ENCODE measurements at regions of chr2 and their contacts with region 1.

Region 1: DNA sequence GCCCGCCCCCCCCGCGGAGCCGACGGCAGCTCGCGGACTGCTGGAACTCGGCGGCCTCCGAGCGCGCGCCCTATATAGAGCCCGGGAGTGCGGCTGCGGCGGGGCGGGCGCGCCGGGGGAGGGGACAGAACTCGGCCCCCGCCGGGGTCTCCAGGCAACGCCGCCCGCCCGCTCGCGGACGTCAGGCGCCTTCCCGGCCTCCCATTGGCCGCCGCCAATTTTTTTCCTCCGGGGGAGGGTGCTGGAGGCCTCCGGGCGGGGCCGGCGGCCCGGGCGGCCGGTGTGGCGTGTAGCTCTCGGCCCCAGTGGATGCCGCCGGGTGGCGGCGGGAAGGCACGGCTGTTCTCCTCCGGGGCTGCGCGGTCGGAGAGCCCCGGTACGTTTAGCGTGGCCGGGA is at the start of gene ZFP36L2:
- DNase-seq: peak; percentile 97
- H3K4me3 ChIP-seq: peak within 1 kb of the TSS; percentile 86 to 87
- H3K27ac ChIP-seq: peak within 1 kb of the TSS; percentile 98 to 99
- H3K4me1 ChIP-seq: peaks cover 12% of the 10 kb centered on the region
- H3K27me3 ChIP-seq: no peaks in the 10 kb centered on the region
- CTCF ChIP-seq: peak in 1 of 4 experiments; percentile 46
- POLR2A ChIP-seq: peak; percentile 95
- total RNA-seq, gene ZFP36L2: 117 to 256 TPM

Region 2: GRCh38 chr2:42859006-42859552 is 367.5 kb before region 1 on chr2:
- intact Hi-C with region 1: loop called (anchors 10 kb)
- DNase-seq: peak; percentile 56
- H3K4me3 ChIP-seq: no peak overlapping the region
- H3K27ac ChIP-seq: no peak overlapping the region
- H3K4me1 ChIP-seq: no peaks in the 10 kb centered on the region
- H3K27me3 ChIP-seq: no peaks in the 10 kb centered on the region
- CTCF ChIP-seq: peak; percentile 67 to 90 (median 84)
- POLR2A ChIP-seq: no peak

Region 3: GRCh38 chr2:42964439-42965083 is 262.0 kb before region 1 on chr2:
- intact Hi-C with region 1: loop called (anchors 5 kb)
- DNase-seq: no peak
- H3K4me3 ChIP-seq: no peak overlapping the region
- H3K27ac ChIP-seq: no peak overlapping the region
- H3K4me1 ChIP-seq: peaks cover 10% of the 10 kb centered on the region
- H3K27me3 ChIP-seq: no peaks in the 10 kb centered on the region
- CTCF ChIP-seq: no peak
- POLR2A ChIP-seq: no peak

Region 4: GRCh38 chr2:43024515-43025011 is 202.0 kb before region 1 on chr2:
- intact Hi-C with region 1: loop called (anchors 2 kb)
- DNase-seq: peak; percentile 32
- H3K4me3 ChIP-seq: no peak overlapping the region
- H3K27ac ChIP-seq: no peak overlapping the region
- H3K4me1 ChIP-seq: no peaks in the 10 kb centered on the region
- H3K27me3 ChIP-seq: no peaks in the 10 kb centered on the region
- CTCF ChIP-seq: peak; percentile 62 to 81 (median 72)
- POLR2A ChIP-seq: no peak

Region 5: GRCh38 chr2:43324259-43325106 is 97.9 kb after region 1 on chr2:
- intact Hi-C with region 1: no loop called
- DNase-seq: no peak
- H3K4me3 ChIP-seq: no peak overlapping the region
- H3K27ac ChIP-seq: peak overlapping the region; percentile 50 to 55
- H3K4me1 ChIP-seq: peaks cover 13% of the 10 kb centered on the region
- H3K27me3 ChIP-seq: no peaks in the 10 kb centered on the region
- CTCF ChIP-seq: no peak
- POLR2A ChIP-seq: no peak

Region 6: DNA sequence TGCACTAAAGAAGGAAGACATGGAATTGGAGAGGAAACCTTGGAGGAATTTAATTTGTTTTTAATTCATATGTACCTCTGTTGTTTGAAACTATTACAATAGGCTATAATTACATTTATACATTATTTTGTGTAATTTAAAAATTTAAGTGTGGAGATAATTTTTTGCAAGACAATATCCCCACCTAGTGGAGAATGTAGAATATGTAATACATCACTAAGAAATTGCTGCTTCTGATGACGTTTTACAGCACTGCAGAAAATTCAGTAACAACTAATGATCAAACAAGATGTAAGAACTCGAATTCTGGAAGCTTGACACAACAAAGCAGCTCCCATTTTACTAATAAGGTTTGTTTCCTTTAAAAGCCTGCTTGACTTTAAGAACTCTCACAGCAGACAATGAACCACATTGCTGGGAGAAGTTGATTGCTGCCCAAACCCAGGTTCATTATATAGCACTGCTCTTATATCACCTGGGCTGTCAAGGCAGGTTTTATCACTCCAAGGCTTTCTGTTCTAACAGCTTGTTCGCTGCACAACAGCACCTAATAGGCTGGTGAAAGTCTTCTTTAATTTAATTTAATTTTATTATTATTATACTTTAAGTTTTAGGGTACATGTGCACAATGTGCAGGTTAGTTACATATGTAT is 315.9 kb after region 1 on chr2:
- intact Hi-C with region 1: loop called (anchors 5 kb)
- DNase-seq: no peak
- H3K4me3 ChIP-seq: no peak overlapping the region
- H3K27ac ChIP-seq: peak overlapping the region in 1 of 2 donors; percentile 48
- H3K4me1 ChIP-seq: peaks cover 2% of the 10 kb centered on the region
- H3K27me3 ChIP-seq: no peaks in the 10 kb centered on the region
- CTCF ChIP-seq: peak; percentile 56 to 84 (median 77)
- POLR2A ChIP-seq: no peak